Activated CD4-positive, alpha-beta T cell treated with anti-CD3 and anti-CD28 coated beads, Interleukin-2, amount 10 ng/mL, durations not matched to agents 7 days and 5 days (primary cell): ENCODE measurements at regions of chr5 and their contacts with region 1.

Region 1: GRCh38 chr5:149551200-149552037 is at the start of gene CSNK1A1:
- DNase-seq: peak; percentile 98
- H3K4me3 Mint-ChIP-seq: peak within 1 kb of the TSS; percentile 99
- H3K27ac Mint-ChIP-seq: peak within 1 kb of the TSS; percentile 99
- H3K4me1 Mint-ChIP-seq: peaks cover 33% of the 10 kb centered on the region
- H3K27me3 Mint-ChIP-seq: no peaks in the 10 kb centered on the region
- total RNA-seq, gene CSNK1A1: 164 to 199 TPM

Region 2: DNA sequence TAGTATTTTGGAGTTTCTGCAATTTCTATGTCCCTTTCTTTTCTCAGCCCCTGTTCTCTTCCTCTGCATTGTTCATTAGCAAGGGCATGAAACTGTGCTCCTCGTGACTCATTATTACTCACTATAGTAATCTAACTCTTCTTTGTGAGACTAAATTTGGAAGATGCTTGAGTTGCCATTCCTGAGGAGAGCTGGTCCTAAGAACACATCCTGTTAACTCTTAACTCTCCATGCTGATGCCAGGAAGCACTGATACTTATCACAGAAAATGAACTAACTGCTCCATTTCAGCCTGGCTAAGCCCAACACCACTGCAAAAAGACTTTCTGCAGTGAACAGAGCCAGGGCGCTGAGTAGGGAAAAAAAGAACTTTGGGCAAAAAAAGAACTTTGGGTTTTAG is 10.4 kb after region 1 on chr5:
- CTCF ChIA-PET with region 1: interaction called, 23 read pairs
- POLR2A ChIA-PET with region 1: interaction called, 6 read pairs
- DNase-seq: no peak
- H3K4me3 Mint-ChIP-seq: no peak overlapping the region
- H3K27ac Mint-ChIP-seq: peak overlapping the region; percentile 7
- H3K4me1 Mint-ChIP-seq: peaks cover 20% of the 10 kb centered on the region
- H3K27me3 Mint-ChIP-seq: no peaks in the 10 kb centered on the region